ENCODE measurements at regions of chr20 and their contacts with region 1.

Region 1: DNA sequence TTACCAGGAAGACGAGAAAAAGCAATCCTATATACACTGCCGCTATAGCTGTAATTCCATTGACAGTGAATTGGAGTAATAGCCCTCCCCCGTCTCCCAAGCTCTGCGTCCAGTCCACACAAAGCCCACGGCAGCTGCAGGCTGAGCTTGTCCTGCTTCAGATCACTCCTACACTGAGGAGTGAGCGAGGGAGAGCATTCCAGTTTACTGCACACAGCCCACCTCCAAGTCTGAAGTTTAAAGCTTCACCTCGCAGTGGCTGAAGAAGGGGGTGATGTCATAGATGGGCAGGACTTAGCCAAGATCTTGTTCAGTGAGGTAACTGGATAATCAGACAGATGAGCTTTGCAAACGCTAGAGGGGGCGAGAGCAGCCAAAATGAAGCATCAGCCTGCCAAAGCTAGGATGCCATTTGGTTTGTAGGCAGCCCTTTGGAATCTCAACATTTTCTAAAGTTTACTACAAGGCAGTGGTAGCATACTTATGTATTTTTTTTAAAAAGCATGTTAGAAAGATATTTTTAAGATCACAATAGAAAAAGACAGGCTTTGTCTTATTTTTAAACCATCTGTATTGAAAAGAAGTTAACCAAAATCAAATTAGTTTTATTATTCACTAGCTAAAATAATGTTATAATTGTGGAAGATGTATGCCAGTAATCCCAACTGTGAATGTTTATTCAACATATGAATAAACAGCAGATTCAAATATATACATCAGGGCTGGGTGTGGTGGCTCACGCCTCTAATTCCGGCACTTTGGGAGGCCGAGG is at the start of gene FLRT3:
- DNase-seq: peak; percentile 98
- H3K4me3 ChIP-seq: peak within 1 kb of the TSS; percentile 81 to 100 (median 97)
- H3K27ac ChIP-seq: peak within 1 kb of the TSS; percentile 98
- H3K4me1 ChIP-seq: no peaks in the 10 kb centered on the region
- H3K27me3 ChIP-seq: no peaks in the 10 kb centered on the region
- CTCF ChIP-seq: peak; percentile 83 to 94
- total RNA-seq, gene FLRT3: 83.4 to 194 TPM

Region 2: DNA sequence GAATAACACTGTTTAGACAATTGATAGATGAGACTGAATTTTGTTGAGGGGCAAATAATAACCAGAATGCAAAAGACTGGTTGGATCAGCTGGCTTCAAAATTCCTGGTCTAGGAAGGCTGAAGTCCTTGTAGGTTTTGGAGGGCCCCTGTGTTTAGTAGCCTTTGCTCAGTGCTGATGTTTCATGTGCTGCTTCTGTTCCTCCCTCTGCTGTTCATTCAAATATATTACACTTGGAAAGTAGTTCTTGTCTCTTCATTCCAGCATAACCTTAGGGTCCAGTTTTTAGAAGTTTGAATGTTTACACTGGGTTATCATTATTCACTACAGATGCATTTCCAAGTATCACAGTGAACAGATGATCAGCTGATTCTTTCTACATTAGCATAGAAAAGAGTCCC is 72.7 kb before region 1 on chr20:
- CTCF ChIA-PET with region 1: no interaction called
- dilution Hi-C with region 1: no loop called
- in situ Hi-C with region 1: no loop called
- intact Hi-C with region 1: loop called (anchors 5 kb)
- DNase-seq: peak; percentile 9
- H3K4me3 ChIP-seq: no peak overlapping the region
- H3K27ac ChIP-seq: no peak overlapping the region
- H3K4me1 ChIP-seq: peaks cover under 1% of the 10 kb centered on the region
- H3K27me3 ChIP-seq: no peaks in the 10 kb centered on the region
- CTCF ChIP-seq: peak; percentile 28 to 56

Region 3: DNA sequence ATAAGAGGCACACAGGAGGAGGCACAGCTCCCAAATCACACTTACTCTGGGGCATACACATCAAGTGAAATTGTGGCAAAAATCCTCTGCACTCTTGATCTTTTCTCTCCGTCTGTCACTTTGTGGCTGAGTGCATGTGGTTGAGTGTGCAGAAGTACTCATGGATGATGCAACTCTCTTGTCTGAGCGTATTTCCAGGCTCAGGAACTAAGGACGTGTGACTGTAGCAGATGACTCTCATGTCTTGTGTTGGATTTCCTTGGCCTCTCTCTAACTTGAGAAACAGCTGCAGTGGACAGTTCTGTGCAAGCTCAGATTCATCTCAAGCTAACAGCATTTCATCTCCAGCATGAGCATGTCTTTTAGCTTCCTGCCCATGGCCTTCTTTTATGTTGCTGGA is 245.3 kb after region 1 on chr20:
- CTCF ChIA-PET with region 1: no interaction called
- dilution Hi-C with region 1: no loop called
- in situ Hi-C with region 1: no loop called
- intact Hi-C with region 1: loop called (anchors 2 kb)
- DNase-seq: peak; percentile 72
- H3K4me3 ChIP-seq: no peak overlapping the region
- H3K27ac ChIP-seq: peak overlapping the region; percentile 35
- H3K4me1 ChIP-seq: peaks cover 24% of the 10 kb centered on the region
- H3K27me3 ChIP-seq: no peaks in the 10 kb centered on the region
- CTCF ChIP-seq: no peak

Region 4: DNA sequence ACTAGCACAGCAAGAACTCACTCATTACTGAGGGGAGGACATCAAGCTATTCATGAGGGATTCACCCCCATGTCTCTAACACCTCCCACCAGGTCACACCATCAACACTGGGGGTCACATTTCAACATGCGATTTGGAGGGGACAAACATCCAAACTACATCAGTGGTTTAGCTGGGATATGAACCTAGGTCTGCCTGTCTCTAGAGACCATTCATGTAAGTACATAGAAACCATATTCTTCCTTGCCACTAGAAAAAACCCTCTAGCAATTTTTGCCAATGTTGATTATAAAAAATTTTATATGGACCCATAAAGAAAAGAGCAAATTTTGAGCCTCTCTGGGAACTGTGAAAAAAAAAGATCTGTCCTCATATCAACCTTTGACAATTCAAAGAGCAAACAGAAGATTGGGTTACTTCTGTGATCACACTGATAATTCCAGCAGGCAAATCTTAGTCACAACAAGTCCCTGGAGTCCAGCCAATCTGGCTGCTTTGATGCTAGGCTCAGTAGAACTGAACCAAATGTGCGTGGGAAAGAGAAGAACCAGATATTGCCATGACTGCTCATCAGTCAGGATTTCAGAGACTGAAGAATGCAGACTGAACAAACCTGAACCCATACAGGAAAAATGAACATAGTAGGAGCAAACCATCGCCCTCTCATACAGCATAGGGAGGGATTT is 438.1 kb after region 1 on chr20:
- CTCF ChIA-PET with region 1: no interaction called
- dilution Hi-C with region 1: no loop called
- in situ Hi-C with region 1: no loop called
- intact Hi-C with region 1: loop called (anchors 10 kb)
- DNase-seq: peak; percentile 91
- H3K4me3 ChIP-seq: no peak overlapping the region
- H3K27ac ChIP-seq: no peak overlapping the region
- H3K4me1 ChIP-seq: peaks cover 9% of the 10 kb centered on the region
- H3K27me3 ChIP-seq: no peaks in the 10 kb centered on the region
- CTCF ChIP-seq: no peak

Region 5: GRCh38 chr20:14963262-14963663 is 625.7 kb after region 1 on chr20:
- CTCF ChIA-PET with region 1: interaction called, 3 read pairs
- dilution Hi-C with region 1: no loop called
- in situ Hi-C with region 1: loop called in 1 of 2 experiments (anchors 25 kb)
- intact Hi-C with region 1: loop called (anchors 5 kb)
- DNase-seq: peak; percentile 88
- H3K4me3 ChIP-seq: peak overlapping the region in 2 of 3 experiments; percentile 3 to 36
- H3K27ac ChIP-seq: peak overlapping the region; percentile 85
- H3K4me1 ChIP-seq: peaks cover 21% of the 10 kb centered on the region
- H3K27me3 ChIP-seq: no peaks in the 10 kb centered on the region
- CTCF ChIP-seq: no peak

Region 6: DNA sequence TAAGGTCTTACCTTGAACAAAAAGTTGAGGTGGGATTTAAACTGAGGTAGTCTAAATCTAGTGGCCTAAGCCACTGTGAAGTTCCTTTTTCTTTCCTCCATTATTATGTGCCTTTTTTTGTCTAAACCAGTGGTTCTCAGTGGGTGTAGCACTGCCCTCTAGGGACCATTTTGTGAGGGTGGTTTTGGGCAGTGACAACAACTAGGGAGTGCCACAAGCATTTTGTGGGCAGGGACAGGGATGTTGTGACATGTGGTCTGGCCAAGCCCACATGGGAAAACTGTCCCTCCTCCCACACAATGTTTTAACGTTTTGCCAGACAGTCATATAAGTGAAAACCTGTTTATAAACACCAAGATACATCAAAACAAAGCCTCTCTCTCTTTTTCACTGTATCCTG is 899.2 kb after region 1 on chr20:
- CTCF ChIA-PET with region 1: no interaction called
- dilution Hi-C with region 1: no loop called
- in situ Hi-C with region 1: loop called in 1 of 2 experiments (anchors 10 kb)
- intact Hi-C with region 1: loop called (anchors 1 kb)
- DNase-seq: peak; percentile 67
- H3K4me3 ChIP-seq: no peak overlapping the region
- H3K27ac ChIP-seq: no peak overlapping the region
- H3K4me1 ChIP-seq: peaks cover 12% of the 10 kb centered on the region
- H3K27me3 ChIP-seq: no peaks in the 10 kb centered on the region
- CTCF ChIP-seq: peak; percentile 76 to 78